ENCODE measurements at regions of chr3 and their contacts with region 1.

Region 1: DNA sequence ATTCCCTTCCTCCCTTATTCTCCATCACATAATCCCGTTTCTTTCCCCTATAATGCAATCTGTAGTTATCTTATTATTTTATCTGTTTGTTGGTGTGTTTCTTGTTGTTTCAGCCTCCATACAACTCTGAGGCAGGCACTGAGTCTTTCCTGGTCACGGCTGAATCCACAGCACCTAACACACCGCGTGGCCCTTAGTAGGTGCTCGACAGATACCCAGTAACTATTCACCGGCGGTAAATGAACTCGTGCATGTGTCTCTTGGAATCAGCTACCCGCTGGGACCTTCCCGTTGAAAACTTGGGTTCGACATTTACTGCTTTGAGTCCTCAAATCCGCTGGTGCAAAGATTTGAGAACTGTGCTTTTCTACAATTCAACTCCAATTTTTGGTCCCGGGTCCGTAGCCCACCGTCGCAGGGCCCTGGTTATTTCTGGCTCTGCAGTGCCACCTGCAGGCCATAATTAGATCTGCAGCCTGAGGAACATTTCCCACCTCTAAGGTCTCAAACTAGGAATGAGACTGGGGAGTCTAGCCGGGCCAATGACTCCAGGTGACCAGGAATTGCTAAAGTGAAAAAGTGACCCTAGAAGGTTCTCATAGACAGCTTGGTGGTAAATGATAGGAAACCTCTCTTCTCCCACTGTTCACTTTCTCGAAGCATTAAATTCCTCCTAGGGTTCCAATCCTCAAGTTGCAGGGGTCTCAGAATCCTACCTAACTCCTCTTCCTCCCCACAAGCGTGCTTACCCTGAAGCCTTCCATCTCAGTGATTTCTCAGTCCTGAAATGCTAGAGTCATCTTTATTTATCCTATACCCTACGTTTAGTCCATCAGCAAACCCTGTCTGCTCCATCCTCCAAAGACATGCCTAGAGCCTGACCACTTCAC is 40.0 kb upstream of the TRH start:
- DNase-seq: peak in 12 of 14 experiments; percentile 4 to 71 (median 16)
- ATAC-seq: no peak
- H3K4me3 ChIP-seq: no peak overlapping the region
- H3K4me3 Mint-ChIP-seq: no peak overlapping the region
- H3K27ac ChIP-seq: no peak overlapping the region
- H3K27ac Mint-ChIP-seq: no peak overlapping the region
- H3K4me1 ChIP-seq: peaks cover 9% of the 10 kb centered on the region
- H3K4me1 Mint-ChIP-seq: peaks cover 16% of the 10 kb centered on the region
- H3K27me3 ChIP-seq: no peaks in the 10 kb centered on the region
- H3K27me3 Mint-ChIP-seq: peaks cover 3% of the 10 kb centered on the region
- CTCF ChIP-seq: peak; percentile 98

Region 2: GRCh38 chr3:129490242-129491045 is 444.0 kb before region 1 on chr3:
- CTCF ChIA-PET with region 1: no interaction called
- POLR2A ChIA-PET with region 1: no interaction called
- intact Hi-C with region 1: loop called (anchors 1 kb)
- DNase-seq: peak; percentile 22 to 83 (median 42)
- ATAC-seq: peak; percentile 98
- H3K4me3 ChIP-seq: no peak overlapping the region
- H3K4me3 Mint-ChIP-seq: no peak overlapping the region
- H3K27ac ChIP-seq: no peak overlapping the region
- H3K27ac Mint-ChIP-seq: no peak overlapping the region
- H3K4me1 ChIP-seq: peaks cover 6% of the 10 kb centered on the region
- H3K4me1 Mint-ChIP-seq: no peaks in the 10 kb centered on the region
- H3K27me3 ChIP-seq: no peaks in the 10 kb centered on the region
- H3K27me3 Mint-ChIP-seq: no peaks in the 10 kb centered on the region
- CTCF ChIP-seq: peak; percentile 86

Region 3: GRCh38 chr3:129650256-129650872 is 284.1 kb before region 1 on chr3:
- CTCF ChIA-PET with region 1: no interaction called
- POLR2A ChIA-PET with region 1: no interaction called
- intact Hi-C with region 1: loop called (anchors 1 kb)
- DNase-seq: peak; percentile 23 to 72 (median 44)
- ATAC-seq: peak; percentile 51
- H3K4me3 ChIP-seq: no peak overlapping the region
- H3K4me3 Mint-ChIP-seq: no peak overlapping the region
- H3K27ac ChIP-seq: no peak overlapping the region
- H3K27ac Mint-ChIP-seq: no peak overlapping the region
- H3K4me1 ChIP-seq: no peaks in the 10 kb centered on the region
- H3K4me1 Mint-ChIP-seq: peaks cover 4% of the 10 kb centered on the region
- H3K27me3 ChIP-seq: no peaks in the 10 kb centered on the region
- H3K27me3 Mint-ChIP-seq: no peaks in the 10 kb centered on the region
- CTCF ChIP-seq: peak; percentile 64

Region 4: GRCh38 chr3:129867506-129868124 is 66.9 kb before region 1 on chr3:
- CTCF ChIA-PET with region 1: no interaction called
- POLR2A ChIA-PET with region 1: no interaction called
- intact Hi-C with region 1: no loop called
- DNase-seq: no peak
- ATAC-seq: no peak
- H3K4me3 ChIP-seq: no peak overlapping the region
- H3K4me3 Mint-ChIP-seq: no peak overlapping the region
- H3K27ac ChIP-seq: no peak overlapping the region
- H3K27ac Mint-ChIP-seq: no peak overlapping the region
- H3K4me1 ChIP-seq: no peaks in the 10 kb centered on the region
- H3K4me1 Mint-ChIP-seq: peaks cover 49% of the 10 kb centered on the region
- H3K27me3 ChIP-seq: no peaks in the 10 kb centered on the region
- H3K27me3 Mint-ChIP-seq: no peaks in the 10 kb centered on the region
- CTCF ChIP-seq: no peak

Region 5: GRCh38 chr3:129893581-129894070 is 40.9 kb before region 1 on chr3 and contains the start of gene TMCC1:
- CTCF ChIA-PET with region 1: no interaction called
- POLR2A ChIA-PET with region 1: no interaction called
- intact Hi-C with region 1: loop called in 1 of 2 experiments (anchors 5 kb)
- DNase-seq: peak; percentile 79 to 98 (median 88)
- ATAC-seq: peak; percentile 93
- H3K4me3 ChIP-seq: peak within 1 kb of the TSS; percentile 92
- H3K4me3 Mint-ChIP-seq: peak within 1 kb of the TSS; percentile 94
- H3K27ac ChIP-seq: peak within 1 kb of the TSS; percentile 78 to 87
- H3K27ac Mint-ChIP-seq: peak within 1 kb of the TSS; percentile 90
- H3K4me1 ChIP-seq: peaks cover 28% of the 10 kb centered on the region
- H3K4me1 Mint-ChIP-seq: peaks cover 51% of the 10 kb centered on the region
- H3K27me3 ChIP-seq: no peaks in the 10 kb centered on the region
- H3K27me3 Mint-ChIP-seq: no peaks in the 10 kb centered on the region
- CTCF ChIP-seq: no peak
- total RNA-seq, gene TMCC1: 33.3 to 33.8 TPM